ENCODE measurements at regions of chr3 and their contacts with region 1.

Region 1: GRCh38 chr3:53709860-53710674 is 136.2 kb downstream of the CHDH start:
- DNase-seq: peak; percentile 32 to 90
- H3K4me3 ChIP-seq: no peak overlapping the region
- CTCF ChIP-seq: no peak
- POLR2A ChIP-seq: no peak

Region 2: GRCh38 chr3:53303957-53304356 is 406.1 kb before region 1 on chr3:
- intact Hi-C with region 1: loop called (anchors 5 kb)
- DNase-seq: no peak
- H3K4me3 ChIP-seq: no peak overlapping the region
- CTCF ChIP-seq: no peak
- POLR2A ChIP-seq: no peak

Region 3: DNA sequence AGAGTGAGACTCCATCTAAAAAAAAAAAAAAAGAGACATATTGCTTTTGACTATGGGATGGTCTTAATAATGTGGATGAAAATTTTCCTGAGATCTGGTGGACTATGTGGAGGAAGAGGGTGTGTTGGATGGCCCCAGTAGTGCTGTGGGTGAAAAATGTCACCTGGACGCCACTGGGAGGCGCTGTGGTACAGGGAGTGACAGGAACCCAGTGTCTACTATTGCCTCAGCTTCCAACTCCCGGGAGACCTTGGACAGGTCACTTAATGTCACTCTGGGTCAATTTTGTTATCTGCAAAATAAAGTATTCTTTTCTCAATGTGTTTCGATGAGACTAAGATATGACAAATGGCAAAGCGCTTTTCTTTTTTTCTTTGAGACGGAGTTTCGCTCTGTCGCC is 335.0 kb before region 1 on chr3:
- intact Hi-C with region 1: loop called (anchors 10 kb)
- DNase-seq: peak; percentile 23 to 86
- H3K4me3 ChIP-seq: no peak overlapping the region
- CTCF ChIP-seq: peak in 1 of 3 donors; percentile 32
- POLR2A ChIP-seq: no peak

Region 4: GRCh38 chr3:54339608-54340007 is 629.5 kb after region 1 on chr3:
- intact Hi-C with region 1: no loop called
- DNase-seq: no peak
- H3K4me3 ChIP-seq: no peak overlapping the region
- CTCF ChIP-seq: no peak
- POLR2A ChIP-seq: no peak

Measured in lower leg skin (tissue), 4 donors.